HEK293 (cell line): ENCODE measurements at regions of chr2 and their contacts with region 1.

Region 1: DNA sequence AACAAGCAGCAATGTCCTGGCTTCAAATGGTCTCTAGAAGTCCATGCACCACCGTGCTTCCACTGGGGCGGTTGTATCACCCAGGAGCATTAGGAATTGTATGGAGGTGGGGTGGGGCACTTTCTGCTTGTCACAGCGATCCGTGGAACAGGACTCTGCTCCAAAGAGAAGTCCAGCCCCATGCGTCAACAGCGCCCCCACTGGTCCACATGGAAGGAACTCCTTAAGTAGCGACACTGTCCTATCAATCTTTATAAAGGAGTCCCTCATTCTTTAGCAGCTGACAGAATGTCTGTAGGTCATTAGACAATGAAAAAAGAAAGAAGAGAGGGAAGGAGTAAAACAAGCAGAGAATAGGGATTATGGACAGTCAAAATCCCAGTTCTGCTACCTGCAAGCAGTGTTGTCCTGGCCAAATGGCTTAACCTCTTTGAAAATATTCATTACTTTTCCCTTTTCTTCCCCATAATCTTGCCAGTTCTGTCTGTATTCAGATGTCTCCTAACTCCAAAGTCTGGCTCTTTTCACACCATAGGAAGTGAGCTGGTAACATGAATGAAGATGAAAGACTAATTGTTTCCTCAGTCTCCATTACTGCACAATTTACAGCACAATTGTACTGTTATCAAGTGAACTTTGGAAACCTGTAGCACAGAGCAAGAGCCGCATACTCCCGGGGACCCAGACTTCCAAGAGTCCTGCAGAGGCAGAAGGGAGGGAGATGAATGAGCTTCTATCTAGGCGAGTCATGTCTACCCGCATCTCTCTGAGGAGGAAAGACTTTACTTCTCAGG is 9.9 kb downstream of the NFE2L2 start:
- H3K4me3 ChIP-seq: no peak overlapping the region
- H3K27ac ChIP-seq: no peak overlapping the region
- H3K4me1 ChIP-seq: no peaks in the 10 kb centered on the region
- CTCF ChIP-seq: peak; percentile 74

Region 2: GRCh38 chr2:177239932-177240630 is 14.5 kb before region 1 on chr2:
- CTCF ChIA-PET with region 1: interaction called, 33 read pairs
- POLR2A ChIA-PET with region 1: no interaction called
- H3K4me3 ChIP-seq: no peak overlapping the region
- H3K27ac ChIP-seq: no peak overlapping the region
- H3K4me1 ChIP-seq: peaks cover 30% of the 10 kb centered on the region
- CTCF ChIP-seq: no peak